Spleen (tissue), 13 donors: ENCODE measurements at regions of chr4 and their contacts with region 1.

Region 1: DNA sequence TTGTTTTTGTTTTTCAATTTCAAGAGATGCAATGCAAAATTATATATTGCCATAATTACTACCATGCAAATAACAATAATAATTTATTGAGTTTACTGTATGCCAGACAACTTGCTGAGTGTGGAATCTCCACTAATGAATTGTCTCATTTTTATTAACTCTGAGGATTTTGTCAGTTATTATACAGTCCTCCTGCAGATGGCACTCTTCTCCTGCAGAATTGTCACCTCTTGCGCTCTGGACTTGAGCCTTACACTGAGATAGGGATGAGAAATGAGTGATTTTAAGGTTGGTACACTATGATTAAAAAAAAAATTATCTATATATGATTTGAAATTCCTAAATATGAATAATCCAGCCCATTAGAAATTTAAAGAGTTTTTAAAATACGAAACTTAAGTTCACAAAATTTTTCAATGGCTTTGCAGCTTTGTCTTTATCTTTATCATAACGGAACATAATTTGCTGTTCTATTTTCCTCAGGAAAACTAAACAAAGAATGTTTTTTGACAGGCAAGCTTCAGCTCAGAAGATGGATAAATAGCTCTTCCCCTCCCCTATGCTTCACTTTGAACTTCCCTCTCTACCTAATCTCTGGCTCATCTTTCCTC is 12.7 kb upstream of the PAQR3 start:
- DNase-seq: no peak
- H3K4me3 ChIP-seq: no peak overlapping the region
- H3K27ac ChIP-seq: no peak overlapping the region
- H3K4me1 ChIP-seq: no peaks in the 10 kb centered on the region
- H3K27me3 ChIP-seq: peaks cover 0 to 8% (median 0%) of the 10 kb centered on the region in 7 donors
- CTCF ChIP-seq: peak; percentile 16 to 70 (median 59)
- POLR2A ChIP-seq: no peak

Region 2: DNA sequence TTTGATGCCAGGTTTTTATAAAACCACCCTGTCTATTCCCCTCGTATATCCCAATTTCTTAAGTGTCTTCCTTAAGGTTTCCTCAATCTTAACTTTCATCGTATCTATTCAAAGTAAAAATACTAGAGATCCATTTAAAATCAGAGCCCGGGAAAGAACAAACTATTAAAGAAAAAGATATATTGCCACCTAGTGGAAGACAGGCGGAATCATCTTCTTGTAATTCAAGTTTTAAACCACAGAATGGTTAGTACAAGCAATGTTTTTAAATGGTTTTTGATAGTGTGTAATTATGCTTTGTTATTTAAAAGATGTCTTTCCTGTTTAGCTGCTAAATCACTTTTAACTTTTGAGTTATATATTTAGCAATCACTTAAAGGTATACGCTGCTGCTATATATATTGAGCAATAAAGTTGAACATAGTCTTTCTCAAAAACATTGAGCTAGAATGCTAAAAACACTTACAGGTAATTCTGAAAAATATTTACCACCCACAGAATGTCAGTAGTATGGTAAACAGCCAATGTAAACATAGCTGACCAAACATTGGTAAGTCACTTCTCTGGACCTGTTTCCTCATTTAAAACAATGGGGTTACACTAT is 1263.6 kb after region 1 on chr4:
- intact Hi-C with region 1: loop called (anchors 5 kb)
- DNase-seq: no peak
- H3K4me3 ChIP-seq: no peak overlapping the region
- H3K27ac ChIP-seq: no peak overlapping the region
- H3K4me1 ChIP-seq: peaks cover 0 to 6% (median 0%) of the 10 kb centered on the region in 6 donors
- H3K27me3 ChIP-seq: peaks cover 0 to 39% (median 3%) of the 10 kb centered on the region in 7 donors
- CTCF ChIP-seq: peak in 10 of 11 experiments; percentile 13 to 77 (median 70)
- POLR2A ChIP-seq: no peak